Activated CD4-positive, alpha-beta memory T cell treated with anti-CD3 and anti-CD28 coated beads for 36 hours (primary cell): ENCODE measurements at regions of chr10 and their contacts with region 1.

Region 1: DNA sequence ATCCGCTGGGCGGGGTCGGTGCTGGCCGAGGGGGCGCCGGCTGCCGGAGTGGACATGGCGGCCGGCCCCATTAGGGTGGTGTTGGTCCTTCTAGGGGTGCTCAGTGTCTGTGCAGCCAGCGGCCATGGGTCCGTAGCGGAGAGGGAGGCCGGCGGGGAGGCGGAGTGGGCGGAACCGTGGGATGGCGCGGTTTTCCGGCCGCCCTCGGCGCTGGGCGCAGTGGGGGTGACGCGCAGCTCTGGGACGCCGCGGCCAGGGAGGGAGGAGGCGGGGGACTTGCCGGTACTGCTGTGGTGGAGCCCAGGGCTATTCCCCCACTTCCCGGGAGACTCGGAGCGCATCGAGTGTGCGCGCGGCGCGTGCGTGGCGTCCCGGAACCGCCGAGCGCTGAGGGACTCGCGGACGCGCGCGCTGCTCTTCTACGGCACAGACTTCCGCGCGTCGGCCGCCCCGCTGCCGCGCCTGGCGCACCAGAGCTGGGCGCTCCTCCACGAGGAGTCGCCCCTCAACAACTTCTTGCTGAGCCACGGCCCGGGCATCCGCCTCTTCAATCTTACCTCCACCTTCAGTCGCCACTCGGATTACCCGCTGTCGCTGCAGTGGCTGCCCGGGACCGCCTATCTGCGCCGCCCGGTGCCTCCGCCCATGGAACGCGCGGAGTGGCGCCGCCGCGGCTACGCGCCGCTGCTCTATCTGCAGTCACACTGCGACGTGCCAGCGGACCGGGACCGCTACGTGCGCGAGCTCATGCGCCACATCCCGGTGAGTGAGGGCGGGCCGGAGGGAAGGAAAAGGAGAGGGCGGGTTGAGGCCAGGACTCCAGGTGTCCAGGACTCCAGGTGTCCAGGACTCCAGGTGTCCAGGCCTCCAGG is 9.3 kb upstream of the CHCHD1 start:
- DNase-seq: peak; percentile 86
- H3K4me3 Mint-ChIP-seq: peak overlapping the region; percentile 95
- H3K27ac Mint-ChIP-seq: peak overlapping the region; percentile 88
- H3K4me1 Mint-ChIP-seq: peaks cover 55% of the 10 kb centered on the region
- H3K27me3 Mint-ChIP-seq: no peaks in the 10 kb centered on the region

Region 2: DNA sequence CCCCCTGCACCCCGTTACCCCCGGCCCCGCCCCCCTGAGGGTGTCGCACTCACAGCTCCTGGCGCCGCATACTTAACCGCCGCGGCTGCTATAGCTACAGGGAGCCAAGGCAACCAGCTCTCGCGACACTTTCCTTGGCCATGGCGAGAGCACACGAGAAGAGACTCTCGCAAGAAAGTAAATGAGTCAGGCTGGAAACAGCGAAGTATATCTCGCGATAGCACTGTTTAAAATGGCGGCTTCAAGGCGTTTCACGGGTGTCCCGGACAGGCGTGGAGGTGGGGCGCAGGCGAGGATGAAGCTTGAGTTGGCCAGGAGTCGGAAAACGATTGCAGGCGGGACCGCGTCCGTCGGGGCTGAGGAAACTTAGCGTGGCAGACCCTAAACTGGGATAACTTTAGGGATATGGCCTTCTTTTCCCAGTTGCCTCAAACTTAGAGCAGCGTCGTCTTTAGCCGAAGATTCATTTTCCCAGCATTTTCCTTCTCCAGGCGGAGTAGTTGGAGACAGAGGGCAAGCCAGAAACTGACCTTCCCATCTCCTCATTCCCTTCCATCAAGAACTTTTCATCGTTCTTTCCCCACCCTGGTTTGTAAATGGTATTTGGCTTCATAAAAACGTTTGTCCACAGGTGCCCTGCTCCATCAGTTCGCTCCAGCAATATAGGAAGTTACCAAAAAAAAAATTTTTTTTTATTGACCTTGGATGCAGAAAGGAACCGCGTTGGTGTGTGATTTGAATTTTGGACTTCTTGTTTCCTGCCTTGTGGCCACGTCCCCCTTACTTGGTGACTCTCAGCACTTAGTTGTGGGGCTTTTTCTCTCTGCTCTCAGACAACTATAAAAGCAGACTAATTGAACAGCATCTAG is 146.4 kb before region 1 on chr10:
- CTCF ChIA-PET with region 1: no interaction called
- POLR2A ChIA-PET with region 1: no interaction called
- intact Hi-C with region 1: loop called (anchors 10 kb)
- DNase-seq: peak; percentile 96
- H3K4me3 Mint-ChIP-seq: peak overlapping the region; percentile 94
- H3K27ac Mint-ChIP-seq: peak overlapping the region; percentile 93
- H3K4me1 Mint-ChIP-seq: peaks cover 17% of the 10 kb centered on the region
- H3K27me3 Mint-ChIP-seq: no peaks in the 10 kb centered on the region

Region 3: DNA sequence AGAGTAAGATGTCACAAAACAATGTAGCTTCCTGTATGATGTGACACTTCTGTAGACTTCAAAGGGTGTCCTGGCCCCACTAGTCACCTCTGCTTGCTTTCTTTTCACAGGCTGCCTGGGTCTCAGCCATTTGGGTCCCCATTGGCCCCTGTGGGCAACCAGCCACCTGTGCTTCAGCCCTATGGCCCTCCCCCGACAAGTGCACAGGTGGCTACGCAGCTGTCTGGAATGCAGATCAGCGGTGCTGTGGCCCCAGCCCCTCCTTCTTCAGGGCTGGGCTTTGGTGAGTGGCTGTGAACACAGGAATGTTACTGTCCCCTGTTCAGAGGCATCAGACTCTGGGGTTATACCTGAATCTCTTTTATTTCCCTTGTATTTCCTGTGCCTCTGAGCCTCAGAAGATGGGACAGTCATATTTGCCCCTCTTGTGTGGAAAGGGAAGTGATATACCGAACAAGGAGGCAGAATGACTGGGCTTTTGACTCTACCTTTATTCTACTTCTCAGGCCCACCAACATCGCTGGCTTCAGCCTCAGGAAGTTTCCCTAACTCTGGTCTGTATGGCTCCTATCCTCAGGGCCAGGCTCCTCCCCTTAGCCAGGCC is 12.9 kb before region 1 on chr10:
- CTCF ChIA-PET with region 1: interaction called, 15 read pairs
- POLR2A ChIA-PET with region 1: interaction called, 21 read pairs
- intact Hi-C with region 1: no loop called
- DNase-seq: peak; percentile 67
- H3K4me3 Mint-ChIP-seq: no peak overlapping the region
- H3K27ac Mint-ChIP-seq: peak overlapping the region; percentile 82
- H3K4me1 Mint-ChIP-seq: peaks cover 65% of the 10 kb centered on the region
- H3K27me3 Mint-ChIP-seq: no peaks in the 10 kb centered on the region

Region 4: DNA sequence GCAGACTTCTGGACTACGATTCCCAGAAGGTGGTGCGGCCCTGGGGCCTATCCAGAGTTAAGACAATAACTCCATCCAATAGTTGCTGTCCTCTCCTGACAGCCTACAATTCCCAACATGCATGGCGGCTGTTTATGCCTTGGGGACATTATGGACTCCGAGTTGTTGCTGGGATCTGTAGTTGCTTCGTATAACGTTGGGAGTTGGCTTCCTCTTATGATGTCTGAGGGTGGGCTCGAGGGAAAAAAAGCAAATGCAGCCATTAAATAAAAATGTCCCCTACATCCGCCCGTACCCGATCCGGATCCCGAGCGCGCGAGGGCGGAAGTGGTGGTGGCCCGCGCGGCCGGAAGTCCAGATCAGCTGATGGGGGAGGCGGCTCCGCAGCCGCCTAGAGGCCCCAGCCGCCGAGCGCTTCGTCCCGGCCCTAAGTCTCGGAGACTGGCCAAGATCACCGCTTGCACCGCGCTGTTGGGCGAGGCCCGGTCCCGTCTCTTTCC is 12.8 kb after region 1 on chr10 and contains the start of gene ZSWIM8:
- CTCF ChIA-PET with region 1: interaction called, 16 read pairs
- POLR2A ChIA-PET with region 1: interaction called, 43 read pairs
- intact Hi-C with region 1: loop called (anchors 1 kb)
- DNase-seq: peak; percentile 90
- H3K4me3 Mint-ChIP-seq: peak within 1 kb of the TSS; percentile 98
- H3K27ac Mint-ChIP-seq: peak within 1 kb of the TSS; percentile 96
- H3K4me1 Mint-ChIP-seq: peaks cover 40% of the 10 kb centered on the region
- H3K27me3 Mint-ChIP-seq: no peaks in the 10 kb centered on the region
- total RNA-seq, gene ZSWIM8: 45.1 to 46.2 TPM

Region 5: GRCh38 chr10:73810735-73811465 is 38.4 kb after region 1 on chr10:
- CTCF ChIA-PET with region 1: interaction called, 4 read pairs
- POLR2A ChIA-PET with region 1: interaction called, 8 read pairs
- intact Hi-C with region 1: loop called (anchors 1 kb)
- DNase-seq: peak; percentile 68
- H3K4me3 Mint-ChIP-seq: peak overlapping the region; percentile 85
- H3K27ac Mint-ChIP-seq: peak overlapping the region; percentile 95
- H3K4me1 Mint-ChIP-seq: peaks cover 41% of the 10 kb centered on the region
- H3K27me3 Mint-ChIP-seq: no peaks in the 10 kb centered on the region